ENCODE measurements at regions of chr3 and their contacts with region 1.

Region 1: DNA sequence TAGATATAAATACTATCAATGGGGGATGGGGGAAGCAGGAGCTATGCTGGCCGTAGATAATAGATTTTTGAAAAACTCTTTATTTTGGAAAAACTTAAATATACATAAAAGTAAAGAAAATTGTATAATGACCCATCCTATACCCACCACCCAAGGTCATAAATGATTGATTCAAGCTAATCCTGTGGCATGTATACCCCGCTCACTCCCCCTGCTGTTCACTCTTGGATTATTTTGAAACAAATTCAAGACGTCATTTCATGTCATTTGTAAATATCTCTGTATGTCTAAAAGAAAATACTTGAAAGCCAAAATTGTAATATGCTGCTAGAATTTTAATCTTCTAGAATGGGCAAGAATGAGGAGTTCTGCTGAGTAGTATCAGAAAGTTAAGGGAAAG is 241.8 kb downstream of the FEZF2 start:
- DNase-seq: no peak
- ATAC-seq: no peak
- H3K4me3 ChIP-seq: no peak overlapping the region
- H3K27ac ChIP-seq: no peak overlapping the region
- H3K4me1 ChIP-seq: peaks cover 10 to 46% (median 33%) of the 10 kb centered on the region in 9 donors
- H3K27me3 ChIP-seq: no peaks in the 10 kb centered on the region
- CTCF ChIP-seq: peak in 7 of 9 donors; percentile 20 to 63 (median 49)

Region 2: GRCh38 chr3:61858056-61858455 is 273.5 kb before region 1 on chr3:
- intact Hi-C with region 1: loop called in 4 of 10 experiments (anchors 2 to 5 kb)
- DNase-seq: no peak
- ATAC-seq: peak in 6 of 8 donors; percentile 44 to 63 (median 59)
- H3K4me3 ChIP-seq: no peak overlapping the region
- H3K27ac ChIP-seq: peak overlapping the region in 1 of 10 donors; percentile 10
- H3K4me1 ChIP-seq: peaks cover 5 to 87% (median 46%) of the 10 kb centered on the region in 9 donors
- H3K27me3 ChIP-seq: no peaks in the 10 kb centered on the region
- CTCF ChIP-seq: peak; percentile 27 to 79 (median 58)

Region 3: DNA sequence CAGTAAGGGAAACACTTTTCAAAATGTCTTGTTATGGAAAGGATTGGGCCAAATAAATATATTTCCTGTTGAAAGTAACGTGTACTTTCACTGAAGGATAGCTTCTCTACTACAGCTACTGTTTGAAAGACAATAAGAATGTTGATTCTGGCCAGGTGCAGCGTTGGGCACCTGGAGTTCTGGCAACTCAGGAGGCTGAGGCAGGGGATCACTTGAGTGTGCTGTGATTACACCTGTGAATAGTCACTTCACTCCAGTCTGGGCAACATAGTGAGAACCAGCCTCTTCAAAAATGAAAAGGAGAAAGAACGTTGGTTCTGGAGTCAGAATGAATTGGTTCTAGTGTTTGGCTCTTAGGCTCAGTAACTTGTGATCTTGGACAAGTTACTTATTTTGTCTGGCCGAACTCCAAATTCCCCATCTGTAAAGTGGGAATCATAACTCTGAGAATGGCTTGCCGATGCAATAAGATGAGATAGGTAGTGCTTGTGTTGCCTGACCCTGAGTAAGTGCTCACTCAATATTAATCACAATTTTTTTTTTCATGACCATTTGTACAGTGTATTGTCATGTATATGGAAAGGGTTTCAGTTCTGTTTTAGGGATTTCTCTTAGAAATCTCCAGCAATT is 259.4 kb before region 1 on chr3:
- intact Hi-C with region 1: loop called in 1 of 10 experiments (anchors 5 kb)
- DNase-seq: no peak
- ATAC-seq: peak in 6 of 8 donors; percentile 17 to 45 (median 27)
- H3K4me3 ChIP-seq: no peak overlapping the region
- H3K27ac ChIP-seq: peak overlapping the region in 2 of 10 donors; percentile 44 to 56
- H3K4me1 ChIP-seq: peaks cover 5 to 71% (median 40%) of the 10 kb centered on the region in 9 donors
- H3K27me3 ChIP-seq: no peaks in the 10 kb centered on the region
- CTCF ChIP-seq: no peak

Region 4: DNA sequence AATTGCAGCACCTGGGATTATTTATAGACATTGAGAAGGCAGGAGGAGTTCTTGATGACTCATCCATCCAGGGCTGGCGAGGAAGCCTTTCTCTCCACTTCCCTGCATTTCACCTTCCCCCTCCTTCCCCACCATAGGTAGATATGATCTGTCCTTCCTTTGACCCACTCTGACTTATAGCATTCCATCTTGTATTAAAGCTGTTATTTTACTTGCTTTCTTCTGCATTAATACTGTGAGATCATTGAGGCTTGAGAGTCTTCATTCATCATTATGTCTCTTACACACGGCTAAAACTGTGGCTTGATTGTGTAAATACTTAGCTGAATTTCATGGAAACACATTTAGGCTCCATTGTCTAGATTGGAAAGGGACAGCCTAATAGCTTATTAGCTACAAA is 47.0 kb before region 1 on chr3:
- intact Hi-C with region 1: no loop called
- DNase-seq: no peak
- ATAC-seq: peak in 1 of 8 donors; percentile 21
- H3K4me3 ChIP-seq: no peak overlapping the region
- H3K27ac ChIP-seq: no peak overlapping the region
- H3K4me1 ChIP-seq: peaks cover 0 to 18% (median 5%) of the 10 kb centered on the region in 9 donors
- H3K27me3 ChIP-seq: no peaks in the 10 kb centered on the region
- CTCF ChIP-seq: no peak